ENCODE measurements at regions of chr13 and their contacts with region 1.

Region 1: DNA sequence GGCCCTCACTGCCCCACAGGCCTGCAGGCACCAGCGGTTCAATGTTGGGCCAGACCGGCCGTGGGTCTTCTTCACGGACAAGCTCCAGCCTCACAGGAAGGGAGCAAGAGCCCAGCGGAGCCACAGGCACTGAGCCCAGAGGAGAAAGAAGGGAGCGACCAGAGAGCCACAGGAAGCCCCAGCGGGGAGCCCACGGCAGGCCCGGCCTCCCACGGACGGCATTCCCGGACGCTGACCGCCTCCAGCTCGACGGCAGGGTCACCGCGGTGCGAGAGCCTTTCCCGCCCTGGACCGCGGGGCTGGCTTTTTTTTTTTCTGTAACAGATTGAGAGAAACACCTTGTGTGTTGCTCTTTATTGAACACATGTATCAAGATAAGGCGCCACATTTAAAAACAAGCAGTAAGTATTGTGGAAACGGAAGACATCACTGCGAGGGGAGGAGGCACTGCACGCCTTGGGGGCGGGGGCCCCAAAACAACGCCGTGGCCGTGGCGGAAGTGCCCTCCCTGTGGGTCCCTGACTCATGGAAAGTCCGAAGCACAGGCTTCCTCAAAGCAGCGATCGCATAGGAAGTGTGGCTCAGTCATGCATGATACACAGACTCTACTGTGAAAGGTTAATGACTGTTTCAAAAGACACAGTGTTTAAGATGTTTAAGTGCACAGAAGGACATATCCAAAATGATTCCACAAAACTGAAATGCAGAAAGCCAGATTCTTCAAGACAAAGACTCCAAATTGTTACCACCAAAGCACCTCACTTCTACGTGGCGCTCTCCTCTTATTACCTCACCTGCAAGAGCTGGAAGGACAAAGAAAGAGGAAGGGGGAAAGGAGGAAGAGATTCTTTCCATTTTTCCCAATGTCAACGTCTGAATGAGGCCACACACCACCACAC is 3.5 kb downstream of the RASA3 start:
- DNase-seq: peak; percentile 84
- H3K4me3 Mint-ChIP-seq: peak overlapping the region; percentile 98
- H3K27ac Mint-ChIP-seq: peak overlapping the region; percentile 88
- H3K4me1 Mint-ChIP-seq: peaks cover 68% of the 10 kb centered on the region
- H3K27me3 Mint-ChIP-seq: peaks cover 2% of the 10 kb centered on the region

Region 2: DNA sequence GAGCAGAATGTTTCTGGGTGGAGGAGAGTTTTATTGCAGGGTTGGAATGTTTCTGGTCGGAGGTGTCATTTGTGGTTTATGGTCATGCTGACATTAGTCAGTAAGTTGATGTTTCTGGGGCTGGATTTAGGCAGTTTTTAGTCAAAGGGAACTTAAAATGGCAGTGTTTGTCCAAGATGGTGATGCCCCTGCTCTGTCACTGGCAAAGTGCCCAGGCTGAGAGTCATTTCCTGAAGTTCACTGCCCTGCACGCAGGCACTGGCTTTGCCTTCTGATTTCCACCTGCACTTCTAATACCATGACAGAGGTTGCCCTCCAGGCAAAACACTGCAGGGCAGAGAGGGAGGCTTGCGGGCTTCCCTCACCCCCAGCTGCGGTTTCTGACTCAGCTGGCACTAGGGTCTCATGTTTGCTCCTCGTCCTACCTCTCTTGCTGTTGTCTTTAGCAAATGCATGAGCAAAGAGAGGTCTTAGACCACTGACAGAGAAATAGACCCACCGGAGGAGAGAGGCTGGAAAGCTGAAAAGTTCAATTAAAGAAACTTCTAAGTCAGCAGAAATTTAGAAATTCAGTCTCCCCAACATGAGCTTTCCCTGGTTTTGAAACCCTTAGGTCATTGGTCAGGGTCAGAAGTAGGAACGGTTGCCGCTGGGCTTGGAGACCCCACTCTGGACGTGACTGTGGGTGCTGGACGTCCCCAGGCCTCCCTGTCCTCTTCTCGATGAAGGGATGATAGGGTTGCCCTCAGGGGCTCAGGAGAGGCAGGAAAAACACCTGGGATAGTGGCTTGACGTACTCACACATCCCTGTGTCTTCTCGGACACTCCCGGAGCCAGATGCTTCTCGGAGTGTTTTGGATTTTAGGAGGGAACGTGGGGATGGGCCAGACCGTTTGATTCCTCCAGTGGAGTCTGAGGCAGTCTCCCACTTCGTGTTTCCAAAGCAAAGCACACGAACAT is 343.5 kb before region 1 on chr13:
- intact Hi-C with region 1: no loop called
- DNase-seq: no peak
- H3K4me3 Mint-ChIP-seq: no peak overlapping the region
- H3K27ac Mint-ChIP-seq: no peak overlapping the region
- H3K4me1 Mint-ChIP-seq: no peaks in the 10 kb centered on the region
- H3K27me3 Mint-ChIP-seq: peaks cover 12% of the 10 kb centered on the region

Region 3: DNA sequence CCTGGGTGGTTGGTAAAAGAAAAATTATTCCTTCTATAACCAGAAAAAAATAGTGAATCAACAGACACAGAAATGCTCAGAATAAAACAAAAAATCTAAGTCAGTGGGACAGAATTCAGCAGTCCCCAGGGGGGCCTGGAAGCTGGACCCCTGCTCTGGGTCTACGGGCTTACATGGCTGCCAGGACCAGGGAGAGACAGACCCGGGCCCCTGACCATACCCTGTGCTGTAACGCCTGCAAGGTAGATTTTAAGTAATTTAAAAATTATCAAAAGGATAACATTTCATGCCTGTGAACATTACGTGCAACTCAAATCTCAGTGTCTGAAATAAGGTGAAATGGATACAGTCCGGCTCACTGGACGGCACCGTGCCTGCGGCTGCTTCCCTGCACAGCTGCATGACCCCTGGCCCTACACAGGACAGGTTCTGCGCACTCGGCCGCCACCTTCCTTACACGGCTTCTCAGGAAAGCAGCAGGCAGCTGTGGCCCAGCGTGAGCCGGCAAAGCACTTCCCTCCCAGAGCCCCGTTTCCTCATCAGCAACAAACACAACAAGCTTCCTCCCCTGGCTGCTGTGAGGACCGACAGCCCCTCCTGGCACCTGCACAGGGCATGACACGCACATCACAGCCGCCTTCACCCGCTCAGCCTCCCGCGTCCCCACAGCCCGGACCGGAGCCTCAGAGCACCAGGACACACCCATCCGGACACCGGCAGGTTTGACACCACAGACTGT is 18.6 kb before region 1 on chr13:
- intact Hi-C with region 1: loop called (anchors 1 kb)
- DNase-seq: peak; percentile 70
- H3K4me3 Mint-ChIP-seq: peak overlapping the region; percentile 83
- H3K27ac Mint-ChIP-seq: peak overlapping the region; percentile 95
- H3K4me1 Mint-ChIP-seq: peaks cover 62% of the 10 kb centered on the region
- H3K27me3 Mint-ChIP-seq: no peaks in the 10 kb centered on the region

Region 4: DNA sequence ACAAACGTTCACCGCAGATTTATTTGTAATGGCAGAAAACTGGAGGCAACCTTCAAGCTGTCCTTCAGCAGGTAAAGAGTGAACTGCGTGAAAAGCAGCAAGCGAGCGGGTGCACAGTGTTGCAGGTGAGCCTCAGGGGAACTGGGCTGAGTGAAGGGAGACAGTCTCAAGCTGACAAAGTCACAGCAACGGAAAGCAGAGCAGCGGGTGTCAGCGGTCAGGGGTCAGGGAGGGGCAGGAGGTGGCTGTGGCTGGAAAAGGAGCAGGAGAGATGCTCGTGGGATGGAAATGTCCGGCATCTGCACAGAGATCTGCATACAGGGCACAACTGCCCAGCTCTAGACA is 12.0 kb after region 1 on chr13:
- intact Hi-C with region 1: loop called (anchors 1 kb)
- DNase-seq: peak; percentile 37
- H3K4me3 Mint-ChIP-seq: no peak overlapping the region
- H3K27ac Mint-ChIP-seq: no peak overlapping the region
- H3K4me1 Mint-ChIP-seq: peaks cover 14% of the 10 kb centered on the region
- H3K27me3 Mint-ChIP-seq: peaks cover 5% of the 10 kb centered on the region

Region 5: GRCh38 chr13:114148521-114148855 is 19.6 kb after region 1 on chr13:
- intact Hi-C with region 1: loop called (anchors 1 kb)
- DNase-seq: peak; percentile 90
- H3K4me3 Mint-ChIP-seq: peak overlapping the region; percentile 69
- H3K27ac Mint-ChIP-seq: peak overlapping the region; percentile 85
- H3K4me1 Mint-ChIP-seq: peaks cover 84% of the 10 kb centered on the region
- H3K27me3 Mint-ChIP-seq: peaks cover 2% of the 10 kb centered on the region

Region 6: DNA sequence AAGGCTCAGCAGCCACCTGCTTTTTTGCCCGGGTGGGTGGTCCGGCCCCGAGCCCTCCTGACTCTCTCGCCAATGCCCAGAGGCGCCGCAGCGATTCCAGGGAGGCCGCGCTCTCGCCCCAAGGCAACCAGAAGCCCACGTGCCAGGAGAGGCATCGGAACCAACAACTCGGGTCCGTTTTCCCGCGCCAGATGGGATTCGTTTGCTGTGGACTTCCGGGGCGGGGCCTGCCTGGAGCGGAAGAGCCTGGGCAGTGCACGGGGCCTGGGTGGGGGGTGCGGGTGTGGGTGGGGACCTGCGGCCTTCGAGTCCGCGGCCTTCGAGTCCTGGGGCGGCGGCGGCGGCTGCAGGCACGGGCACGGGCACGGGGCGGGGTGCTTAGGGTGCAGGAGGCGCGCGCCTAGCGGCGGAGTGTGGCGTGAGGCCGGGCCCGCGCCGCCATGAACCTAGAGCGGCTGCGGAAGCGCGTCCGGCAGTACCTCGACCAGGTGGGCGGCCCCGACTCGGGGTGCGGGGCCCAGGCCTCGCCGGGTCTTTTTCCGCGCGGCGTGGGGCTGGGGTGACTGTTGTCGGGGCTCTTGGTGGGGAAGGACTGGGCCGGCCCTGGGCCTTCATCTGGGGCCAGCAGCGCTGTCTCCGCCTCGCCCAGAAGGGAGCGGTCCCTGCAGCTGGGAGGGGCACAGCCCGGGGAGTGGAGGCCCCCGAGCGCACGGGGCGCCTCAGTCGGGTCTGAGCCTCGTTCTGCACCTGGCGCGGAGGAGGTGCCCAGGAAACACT is 106.0 kb after region 1 on chr13 and contains the start of gene CDC16:
- intact Hi-C with region 1: loop called (anchors 2 kb)
- DNase-seq: peak; percentile 80
- H3K4me3 Mint-ChIP-seq: peak within 1 kb of the TSS; percentile 88
- H3K27ac Mint-ChIP-seq: peak within 1 kb of the TSS; percentile 81
- H3K4me1 Mint-ChIP-seq: peaks cover 22% of the 10 kb centered on the region
- H3K27me3 Mint-ChIP-seq: peaks cover 8% of the 10 kb centered on the region
- total RNA-seq, gene CDC16: 91.4 and 93.2 TPM in 2 replicates

Measured in activated T-helper 1 cell treated with anti-CD3 and anti-CD28 coated beads, Interleukin-12 subunit alpha, Interleukin-12 subunit beta, Interleukin-2, Interleukin-4 antibody, amounts not matched to agents 30 ng/mL and 10 ng/mL and 1 ng/mL, durations not matched to agents 14 hours and 24 hours and 36 hours (primary cell).